GM12878 (cell line): ENCODE measurements at regions of chr7 and their contacts with region 1.

Region 1: GRCh38 chr7:65037740-65038678 is 31.5 kb upstream of the ERV3-1 start:
- DNase-seq: peak; percentile 57
- ATAC-seq: peak; percentile 91
- H3K4me3 ChIP-seq: peak overlapping the region; percentile 68; the same call in 1 of the 2 replicates
- H3K27ac ChIP-seq: peak overlapping the region; percentile 67
- H3K4me1 ChIP-seq: no peaks in the 10 kb centered on the region
- H3K27me3 ChIP-seq: no peaks in the 10 kb centered on the region
- CTCF ChIP-seq: peak in 1 of 3 experiments; percentile 30; a peak in 1 of 6 replicates
- EP300 ChIP-seq: no peak
- POLR2A ChIP-seq: peak; percentile 84
- RAD21 ChIP-seq: no peak

Region 2: DNA sequence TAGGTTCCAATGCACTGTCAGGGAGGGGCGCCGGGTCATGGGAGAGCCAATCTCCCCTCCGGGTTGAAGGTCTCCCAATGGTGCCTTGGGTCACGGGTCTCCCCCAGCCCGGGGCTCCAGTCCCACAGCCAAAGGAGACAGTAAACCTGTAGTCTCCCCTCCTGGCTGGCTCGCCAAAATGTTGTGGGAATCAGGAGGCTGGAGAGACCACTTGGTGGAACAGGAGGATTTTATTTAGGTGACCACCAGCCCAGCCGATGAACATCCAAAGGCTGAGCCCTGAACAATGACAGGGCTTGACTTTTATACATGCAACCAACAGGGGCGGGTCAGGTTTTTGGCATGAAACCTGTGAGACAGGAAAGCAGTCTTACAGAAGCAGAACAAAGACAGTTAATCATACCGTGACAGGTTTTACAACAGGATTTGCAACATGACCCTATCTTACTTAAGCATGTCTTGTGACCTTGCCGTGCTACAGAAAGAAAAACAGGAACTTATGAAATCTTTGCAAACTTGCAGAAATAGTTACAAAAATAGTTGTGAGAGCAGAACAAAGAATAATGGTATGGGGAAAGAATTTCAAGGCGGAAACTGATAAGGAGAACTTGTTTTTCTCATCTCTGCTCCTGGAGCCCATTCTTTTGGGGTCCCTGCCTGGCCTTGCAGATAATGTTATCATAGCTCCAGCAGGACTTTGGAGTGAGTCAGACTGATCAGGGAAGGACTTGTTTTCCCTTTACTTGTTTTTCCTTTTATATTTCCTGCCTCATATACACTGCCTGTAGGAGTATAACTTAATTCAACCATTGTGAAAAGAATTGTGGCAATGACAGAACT is 38.6 kb before region 1 on chr7:
- CTCF ChIA-PET with region 1: interaction called, 3 read pairs
- POLR2A ChIA-PET with region 1: no interaction called
- RAD21 ChIA-PET with region 1: no interaction called
- SMC1A ChIA-PET with region 1: no interaction called
- in situ Hi-C with region 1: no loop called
- intact Hi-C with region 1: loop called (anchors 5 kb)
- DNase-seq: peak; percentile 19
- ATAC-seq: peak; percentile 51
- H3K4me3 ChIP-seq: no peak overlapping the region
- H3K27ac ChIP-seq: no peak overlapping the region
- H3K4me1 ChIP-seq: no peaks in the 10 kb centered on the region
- H3K27me3 ChIP-seq: no peaks in the 10 kb centered on the region
- CTCF ChIP-seq: no peak
- EP300 ChIP-seq: no peak
- POLR2A ChIP-seq: no peak; the same call in 1 of the 2 replicates
- RAD21 ChIP-seq: no peak

Region 3: GRCh38 chr7:65295409-65295808 is 257.4 kb after region 1 on chr7:
- CTCF ChIA-PET with region 1: no interaction called
- POLR2A ChIA-PET with region 1: no interaction called
- RAD21 ChIA-PET with region 1: no interaction called
- SMC1A ChIA-PET with region 1: no interaction called
- in situ Hi-C with region 1: no loop called
- intact Hi-C with region 1: no loop called
- DNase-seq: no peak
- ATAC-seq: peak; percentile 76
- H3K4me3 ChIP-seq: no peak overlapping the region
- H3K27ac ChIP-seq: no peak overlapping the region
- H3K4me1 ChIP-seq: no peaks in the 10 kb centered on the region
- H3K27me3 ChIP-seq: no peaks in the 10 kb centered on the region
- CTCF ChIP-seq: no peak
- EP300 ChIP-seq: no peak
- POLR2A ChIP-seq: no peak
- RAD21 ChIP-seq: no peak